GM12878 (cell line): ENCODE measurements at regions of chr19 and their contacts with region 1.

Region 1: DNA sequence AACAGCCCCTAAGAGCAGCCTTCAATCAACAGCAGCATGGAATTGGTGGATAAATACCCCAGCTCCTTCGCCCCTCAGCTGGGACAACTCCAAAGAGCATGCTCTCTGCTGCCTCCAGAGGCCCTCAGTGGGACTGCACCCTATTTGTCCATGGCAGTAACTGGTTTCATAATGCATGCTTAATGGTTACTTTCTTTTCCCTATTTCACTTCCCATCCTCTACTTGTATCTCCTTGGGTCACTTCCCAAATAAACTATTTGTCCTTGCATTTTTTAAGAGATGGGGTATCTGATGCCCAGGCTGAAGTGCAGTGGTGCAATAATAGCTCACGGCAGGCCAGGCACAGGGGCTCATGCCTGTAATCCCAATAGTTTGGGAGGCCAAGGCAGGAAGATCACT is 13.5 kb upstream of the TPM4 start:
- DNase-seq: no peak
- ATAC-seq: peak; percentile 77
- H3K4me3 ChIP-seq: no peak overlapping the region
- H3K27ac ChIP-seq: no peak overlapping the region
- H3K4me1 ChIP-seq: peaks cover 6% of the 10 kb centered on the region; the same call in 1 of the 2 replicates
- H3K27me3 ChIP-seq: no peaks in the 10 kb centered on the region
- CTCF ChIP-seq: peak; percentile 60 to 95 (median 91)
- EP300 ChIP-seq: no peak
- POLR2A ChIP-seq: no peak
- RAD21 ChIP-seq: peak; percentile 25

Region 2: GRCh38 chr19:16175954-16176353 is 113.2 kb after region 1 on chr19:
- CTCF ChIA-PET with region 1: interaction called, 15 read pairs
- POLR2A ChIA-PET with region 1: no interaction called
- RAD21 ChIA-PET with region 1: interaction called, 6 read pairs
- SMC1A ChIA-PET with region 1: interaction called, 3 read pairs
- in situ Hi-C with region 1: loop called (anchors 5 kb)
- intact Hi-C with region 1: no loop called
- DNase-seq: no peak
- ATAC-seq: peak; percentile 72
- H3K4me3 ChIP-seq: no peak overlapping the region
- H3K27ac ChIP-seq: peak overlapping the region; percentile 57
- H3K4me1 ChIP-seq: peaks cover 14% of the 10 kb centered on the region
- H3K27me3 ChIP-seq: no peaks in the 10 kb centered on the region
- CTCF ChIP-seq: no peak
- EP300 ChIP-seq: no peak; a peak in 1 of 4 replicates
- POLR2A ChIP-seq: no peak
- RAD21 ChIP-seq: no peak